Sigmoid colon (tissue), 7 donors: ENCODE measurements at regions of chrX and their contacts with region 1.

Region 1: DNA sequence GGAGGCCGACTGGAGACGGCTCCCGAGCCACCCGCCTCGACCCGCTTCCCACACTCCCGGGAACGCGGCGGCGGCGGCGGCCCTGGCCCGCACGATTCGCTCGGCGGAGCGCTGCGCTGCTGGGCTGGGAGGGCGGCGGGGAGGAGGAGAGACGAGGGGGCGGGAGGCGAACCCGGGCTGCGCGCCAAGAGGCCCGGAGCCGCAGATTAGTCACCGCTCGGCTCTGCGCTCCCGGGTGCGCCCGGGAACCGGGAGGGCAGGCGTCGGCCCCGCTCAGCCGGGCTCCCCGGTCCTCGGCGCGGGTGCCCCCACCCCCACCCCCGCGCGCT is 11.2 kb upstream of the BCOR start:
- DNase-seq: peak; percentile 93
- H3K4me3 ChIP-seq: peak overlapping the region; percentile 27 to 72 (median 71)
- H3K27ac ChIP-seq: peak overlapping the region; percentile 90 to 98 (median 94)
- H3K4me1 ChIP-seq: peaks cover 0 to 58% (median 27%) of the 10 kb centered on the region in 4 donors
- H3K27me3 ChIP-seq: peaks cover 0 to 21% (median 0%) of the 10 kb centered on the region in 3 donors
- CTCF ChIP-seq: no peak
- EP300 ChIP-seq: no peak
- POLR2A ChIP-seq: no peak

Region 2: DNA sequence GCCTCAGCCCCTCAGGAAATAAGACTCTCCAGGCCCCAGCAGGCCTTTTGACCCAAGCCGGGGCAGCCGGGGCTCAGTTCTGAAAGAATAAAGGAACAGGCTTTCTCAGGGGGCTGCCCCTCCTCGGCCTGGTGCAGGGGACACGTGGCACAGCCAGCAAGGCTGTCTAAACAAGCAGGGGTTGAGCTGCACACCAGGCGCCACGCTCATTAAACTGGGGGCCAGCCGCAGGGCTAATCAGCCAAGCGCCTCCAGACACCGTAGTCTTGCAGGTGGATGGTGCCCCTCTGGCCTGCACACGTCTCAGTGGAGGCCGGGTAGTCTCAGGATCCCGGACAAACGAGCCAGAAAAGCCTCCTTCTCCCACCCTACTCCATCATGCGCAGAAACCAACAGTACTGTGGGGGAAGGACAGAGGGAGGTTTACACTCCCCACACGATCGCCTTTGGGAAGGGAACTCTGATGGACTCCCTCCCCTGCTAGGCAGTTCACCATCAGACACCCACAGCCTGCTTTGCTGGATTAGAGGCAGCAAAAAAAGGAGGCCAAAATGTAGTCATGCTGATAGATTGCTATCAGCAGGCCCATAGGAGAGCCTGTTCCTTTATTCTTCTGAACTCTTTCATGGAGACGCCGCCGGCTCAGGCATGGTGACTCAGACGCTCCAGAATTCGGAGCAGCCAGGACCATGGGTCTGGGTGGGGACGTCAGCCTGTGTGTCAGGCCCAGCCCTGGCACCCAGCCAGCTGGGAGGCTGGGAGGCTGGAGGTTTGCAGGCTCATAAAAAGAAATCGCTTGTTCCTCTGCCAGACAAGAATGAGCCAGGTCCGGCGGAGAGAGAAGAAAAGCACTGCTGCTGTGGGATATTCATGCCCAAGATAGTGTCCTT is 353.5 kb before region 1 on chrX:
- intact Hi-C with region 1: loop called (anchors 5 kb)
- DNase-seq: peak; percentile 96
- H3K4me3 ChIP-seq: no peak overlapping the region
- H3K27ac ChIP-seq: peak overlapping the region; percentile 79 to 85 (median 81)
- H3K4me1 ChIP-seq: peaks cover 0 to 53% (median 40%) of the 10 kb centered on the region in 4 donors
- H3K27me3 ChIP-seq: no peaks in the 10 kb centered on the region
- CTCF ChIP-seq: no peak
- EP300 ChIP-seq: peak in 2 of 4 donors; percentile 41 to 76
- POLR2A ChIP-seq: no peak

Region 3: GRCh38 chrX:40153335-40154249 is 44.7 kb after region 1 on chrX:
- intact Hi-C with region 1: loop called (anchors 2 kb)
- DNase-seq: peak; percentile 73
- H3K4me3 ChIP-seq: peak overlapping the region; percentile 19 to 53 (median 48)
- H3K27ac ChIP-seq: peak overlapping the region; percentile 71 to 82 (median 76)
- H3K4me1 ChIP-seq: peaks cover 0 to 51% (median 16%) of the 10 kb centered on the region in 4 donors
- H3K27me3 ChIP-seq: peaks cover 0 to 14% (median 0%) of the 10 kb centered on the region in 3 donors
- CTCF ChIP-seq: no peak
- EP300 ChIP-seq: no peak
- POLR2A ChIP-seq: no peak

Region 4: GRCh38 chrX:40209951-40210617 is 101.2 kb after region 1 on chrX:
- intact Hi-C with region 1: no loop called
- DNase-seq: no peak
- H3K4me3 ChIP-seq: no peak overlapping the region
- H3K27ac ChIP-seq: no peak overlapping the region
- H3K4me1 ChIP-seq: no peaks in the 10 kb centered on the region
- H3K27me3 ChIP-seq: no peaks in the 10 kb centered on the region
- CTCF ChIP-seq: no peak
- EP300 ChIP-seq: no peak
- POLR2A ChIP-seq: no peak